Posterior vena cava (tissue), 2 donors: ENCODE measurements at regions of chr1 and their contacts with region 1.

Region 1: GRCh38 chr1:78101514-78101913 is 55.7 kb downstream of the GIPC2 start:
- DNase-seq: no peak

Region 2: GRCh38 chr1:76547916-76548315 is 1553.6 kb before region 1 on chr1:
- intact Hi-C with region 1: no loop called
- DNase-seq: no peak

Region 3: DNA sequence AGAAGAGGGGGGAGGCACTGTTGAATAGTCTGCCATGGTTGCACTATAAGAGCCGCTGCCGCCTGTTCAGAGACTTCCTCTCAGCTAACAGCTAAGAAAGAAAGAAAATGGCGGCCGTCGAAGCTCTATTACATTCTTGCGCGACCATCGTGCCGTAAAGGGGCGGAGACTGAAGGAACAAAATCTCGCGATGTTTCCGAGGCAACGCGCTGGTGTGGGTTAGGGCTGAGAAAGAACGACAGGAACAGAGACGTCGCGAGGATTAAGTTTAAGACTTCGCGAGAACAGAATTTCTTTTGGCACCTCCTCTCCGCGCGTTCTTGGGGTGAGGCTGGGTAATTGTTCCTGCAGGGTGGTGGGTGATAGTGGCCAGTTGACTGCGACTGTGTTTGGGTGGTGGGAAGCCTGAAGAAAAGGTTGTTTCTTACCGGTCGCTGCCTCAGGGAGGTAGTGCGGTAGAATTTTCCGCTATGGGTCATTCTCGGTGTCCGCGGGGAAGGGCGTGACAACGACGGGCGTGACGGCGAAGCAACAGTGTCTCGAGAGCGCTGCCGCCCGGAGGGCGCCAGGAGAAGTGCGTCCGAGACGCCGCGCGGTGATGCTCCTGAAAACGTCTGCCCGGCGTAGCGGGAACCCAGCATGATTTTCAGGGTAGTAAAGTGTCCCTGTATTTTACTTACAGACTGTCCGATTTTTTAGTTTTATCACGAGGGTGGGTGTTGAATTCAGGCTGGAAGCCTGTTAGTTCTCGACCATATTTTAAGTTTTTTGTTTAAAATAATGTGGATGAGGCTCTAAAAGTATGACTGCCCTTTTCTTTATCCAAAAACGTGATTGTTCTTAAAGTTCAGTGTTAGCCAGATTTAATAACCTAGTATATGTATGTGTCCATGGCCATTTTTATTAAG is 122.3 kb before region 1 on chr1 and contains the start of gene FUBP1:
- intact Hi-C with region 1: loop called in 1 of 2 experiments (anchors 10 kb)
- DNase-seq: peak; percentile 98
- total RNA-seq, gene FUBP1: 90.7 to 99.3 TPM

Region 4: GRCh38 chr1:78009836-78010235 is 91.7 kb before region 1 on chr1:
- intact Hi-C with region 1: loop called in 1 of 2 experiments (anchors 10 kb)
- DNase-seq: no peak